Panc1 (cell line): ENCODE measurements at regions of chr10 and their contacts with region 1.

Region 1: DNA sequence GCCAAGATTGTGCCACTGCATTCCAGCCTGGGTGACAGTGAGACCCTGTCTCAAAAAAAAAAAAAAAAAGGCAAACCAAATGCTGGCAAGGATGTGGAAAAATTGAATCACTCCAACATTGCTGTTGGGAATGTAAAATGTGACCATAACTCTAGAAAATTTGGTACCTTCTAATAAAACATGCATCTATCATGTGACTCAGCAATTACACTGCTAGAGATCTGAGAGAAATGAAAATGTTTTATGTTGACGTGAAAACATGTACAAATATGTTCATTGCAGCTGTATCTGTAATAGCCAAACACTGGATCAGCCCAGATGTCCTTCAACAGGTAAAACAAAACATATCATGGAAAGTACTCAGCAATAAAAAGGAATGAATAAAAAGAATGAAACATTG is 30.8 kb upstream of the SAR1A start:
- DNase-seq: no peak
- ATAC-seq: no peak
- H3K4me3 ChIP-seq: no peak overlapping the region
- H3K27ac ChIP-seq: no peak overlapping the region
- H3K4me1 ChIP-seq: no peaks in the 10 kb centered on the region
- H3K27me3 ChIP-seq: no peaks in the 10 kb centered on the region
- CTCF ChIP-seq: no peak

Region 2: DNA sequence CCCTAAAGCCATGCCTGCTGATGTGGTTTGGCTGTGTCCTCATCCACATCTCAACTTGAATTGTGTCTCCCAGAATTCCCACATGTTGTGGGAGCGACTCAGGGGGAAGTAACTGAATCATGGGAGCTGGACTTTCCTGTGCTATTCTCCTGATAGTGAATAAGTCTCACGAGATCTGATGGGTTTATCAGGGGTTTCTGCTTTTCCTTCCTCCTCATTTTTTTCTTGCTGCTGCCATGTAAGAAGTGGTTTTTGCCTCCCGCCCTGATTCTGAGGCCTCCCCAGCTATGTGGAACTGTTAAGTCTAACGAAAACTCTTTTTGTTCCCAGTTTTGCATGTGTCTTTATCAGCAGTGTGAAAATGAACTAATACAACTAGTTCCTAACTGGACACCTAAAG is 136.6 kb before region 1 on chr10:
- CTCF ChIA-PET with region 1: no interaction called
- POLR2A ChIA-PET with region 1: no interaction called
- in situ Hi-C with region 1: no loop called
- intact Hi-C with region 1: no loop called
- DNase-seq: no peak
- ATAC-seq: no peak
- H3K4me3 ChIP-seq: no peak overlapping the region
- H3K27ac ChIP-seq: no peak overlapping the region
- H3K4me1 ChIP-seq: no peaks in the 10 kb centered on the region
- H3K27me3 ChIP-seq: peaks cover 3% of the 10 kb centered on the region; the same call in 1 of the 2 replicates
- CTCF ChIP-seq: no peak

Region 3: DNA sequence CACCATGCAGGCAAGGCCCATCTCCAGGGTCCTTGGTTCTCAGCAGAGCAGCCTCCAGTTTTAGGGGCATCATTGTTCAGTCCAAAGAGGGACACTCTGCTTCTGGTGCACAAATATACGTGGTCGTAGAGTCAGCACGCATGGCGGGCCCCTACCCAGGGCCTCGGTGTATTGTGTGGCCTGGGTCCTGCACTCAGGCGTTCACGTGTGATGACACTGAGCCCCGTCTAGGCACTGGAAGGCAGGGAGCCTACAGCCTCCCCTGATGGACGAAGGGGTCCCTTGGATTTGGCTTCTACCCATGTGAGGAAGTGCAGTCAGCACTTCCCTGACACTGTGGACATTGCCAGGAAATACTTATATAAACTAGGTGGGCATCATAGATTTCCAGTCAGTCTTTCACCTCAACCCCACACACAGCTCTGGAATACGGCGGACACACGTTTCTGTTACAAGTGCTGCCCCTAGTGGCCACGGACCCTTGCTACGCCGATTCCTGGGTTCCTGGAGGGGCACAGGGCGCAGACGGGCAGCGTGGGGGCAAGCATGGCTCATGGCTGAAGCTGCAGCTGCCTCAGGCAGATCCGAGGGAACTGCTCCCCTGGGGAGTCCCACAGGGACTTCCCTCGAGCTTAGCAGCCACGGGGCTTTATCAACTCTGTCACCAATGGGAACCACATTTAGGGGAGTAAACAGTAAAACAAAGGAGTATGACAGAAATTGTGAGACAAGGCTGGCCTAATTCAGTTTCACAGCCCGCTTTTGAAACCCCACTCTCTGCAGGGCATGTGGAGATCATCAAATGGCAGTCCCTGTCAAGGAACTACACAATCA is 93.9 kb before region 1 on chr10:
- CTCF ChIA-PET with region 1: no interaction called
- POLR2A ChIA-PET with region 1: no interaction called
- in situ Hi-C with region 1: no loop called
- intact Hi-C with region 1: no loop called
- DNase-seq: no peak
- ATAC-seq: peak; percentile 79
- H3K4me3 ChIP-seq: no peak overlapping the region
- H3K27ac ChIP-seq: no peak overlapping the region
- H3K4me1 ChIP-seq: no peaks in the 10 kb centered on the region
- H3K27me3 ChIP-seq: no peaks in the 10 kb centered on the region
- CTCF ChIP-seq: peak; percentile 85

Region 4: DNA sequence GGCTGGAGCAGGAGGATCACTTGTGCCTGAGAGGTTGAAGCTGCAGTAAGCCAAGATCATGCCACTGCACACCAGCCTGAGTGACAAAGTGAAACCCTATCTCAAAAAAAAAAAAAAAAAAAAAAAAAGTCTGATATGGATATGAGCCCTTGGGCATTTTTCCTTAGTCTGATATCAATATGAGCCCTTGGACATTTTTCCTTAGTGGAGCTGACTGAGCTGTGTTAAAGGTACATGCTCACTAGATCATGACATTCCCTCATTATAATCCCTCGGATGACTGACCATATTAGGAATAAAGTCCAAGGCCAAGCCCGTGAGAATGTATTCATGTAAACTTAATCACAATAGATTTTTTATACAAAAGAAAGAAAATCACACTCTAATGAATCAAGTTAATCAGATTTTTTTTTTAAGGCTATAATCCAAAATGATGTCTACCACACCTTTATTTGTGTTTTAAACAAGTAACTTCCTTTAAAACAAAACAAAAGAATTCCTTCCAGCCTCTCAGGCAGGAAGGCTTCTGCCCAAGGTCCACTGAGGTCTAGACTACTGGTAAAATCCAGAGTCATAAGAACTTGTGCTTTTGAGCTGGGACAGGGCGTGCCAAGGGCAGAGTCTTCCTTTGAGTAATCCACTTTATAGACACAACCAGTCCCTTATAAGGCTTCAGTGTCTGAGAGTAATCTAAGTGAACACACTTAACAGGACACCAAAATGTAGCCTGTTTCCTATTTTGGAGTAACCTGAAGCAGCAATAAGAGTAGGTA is 26.6 kb after region 1 on chr10:
- CTCF ChIA-PET with region 1: no interaction called
- POLR2A ChIA-PET with region 1: interaction called, 14 read pairs
- in situ Hi-C with region 1: no loop called
- intact Hi-C with region 1: no loop called
- DNase-seq: no peak
- ATAC-seq: no peak
- H3K4me3 ChIP-seq: no peak overlapping the region
- H3K27ac ChIP-seq: no peak overlapping the region
- H3K4me1 ChIP-seq: peaks cover 12% of the 10 kb centered on the region
- H3K27me3 ChIP-seq: no peaks in the 10 kb centered on the region
- CTCF ChIP-seq: no peak

Region 5: DNA sequence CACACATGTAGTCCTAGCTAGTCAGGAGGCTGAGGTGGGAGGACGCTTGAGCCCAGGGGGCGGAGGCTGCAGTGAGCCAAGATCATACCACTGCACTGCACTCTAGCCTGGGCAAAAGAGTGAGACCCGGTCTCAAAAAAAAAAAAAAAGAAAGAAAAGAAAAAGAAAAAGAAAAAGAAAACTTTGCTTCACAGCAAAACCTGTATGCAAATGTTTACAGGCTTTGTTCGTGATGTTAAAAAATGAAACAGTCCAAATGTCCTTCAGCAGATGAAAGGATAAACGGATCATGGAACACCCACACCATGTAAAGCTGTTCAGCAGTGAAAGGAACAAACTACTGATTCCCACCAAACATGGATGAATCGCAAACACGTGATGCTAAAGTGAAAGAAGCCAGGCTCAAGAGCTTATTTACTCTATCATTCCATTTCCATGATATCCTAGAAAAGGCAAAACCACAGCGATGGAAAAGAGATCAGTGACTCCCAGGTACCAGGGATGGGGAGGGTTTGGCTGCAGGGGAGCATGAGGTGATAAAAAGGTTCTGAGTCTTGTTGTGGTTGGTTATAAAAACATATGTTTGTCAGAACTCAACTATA is 166.2 kb after region 1 on chr10:
- CTCF ChIA-PET with region 1: no interaction called
- POLR2A ChIA-PET with region 1: no interaction called
- in situ Hi-C with region 1: no loop called
- intact Hi-C with region 1: no loop called
- DNase-seq: no peak
- ATAC-seq: no peak
- H3K4me3 ChIP-seq: peak overlapping the region in 1 of 2 experiments; percentile 23; a peak in 1 of 4 replicates
- H3K27ac ChIP-seq: 0 out of 2 replicates have a peak overlapping the region, but pooled peaks have one; percentile 1
- H3K4me1 ChIP-seq: peaks cover 19% of the 10 kb centered on the region
- H3K27me3 ChIP-seq: no peaks in the 10 kb centered on the region
- CTCF ChIP-seq: no peak